ENCODE measurements at regions of chr18 and their contacts with region 1.

Region 1: GRCh38 chr18:54972690-54973445 is 13.6 kb upstream of the CCDC68 start:
- DNase-seq: no peak
- H3K4me3 ChIP-seq: no peak overlapping the region
- H3K27ac ChIP-seq: no peak overlapping the region
- H3K4me1 ChIP-seq: no peaks in the 10 kb centered on the region
- H3K27me3 ChIP-seq: no peaks in the 10 kb centered on the region
- CTCF ChIP-seq: no peak
- POLR2A ChIP-seq: no peak

Region 2: DNA sequence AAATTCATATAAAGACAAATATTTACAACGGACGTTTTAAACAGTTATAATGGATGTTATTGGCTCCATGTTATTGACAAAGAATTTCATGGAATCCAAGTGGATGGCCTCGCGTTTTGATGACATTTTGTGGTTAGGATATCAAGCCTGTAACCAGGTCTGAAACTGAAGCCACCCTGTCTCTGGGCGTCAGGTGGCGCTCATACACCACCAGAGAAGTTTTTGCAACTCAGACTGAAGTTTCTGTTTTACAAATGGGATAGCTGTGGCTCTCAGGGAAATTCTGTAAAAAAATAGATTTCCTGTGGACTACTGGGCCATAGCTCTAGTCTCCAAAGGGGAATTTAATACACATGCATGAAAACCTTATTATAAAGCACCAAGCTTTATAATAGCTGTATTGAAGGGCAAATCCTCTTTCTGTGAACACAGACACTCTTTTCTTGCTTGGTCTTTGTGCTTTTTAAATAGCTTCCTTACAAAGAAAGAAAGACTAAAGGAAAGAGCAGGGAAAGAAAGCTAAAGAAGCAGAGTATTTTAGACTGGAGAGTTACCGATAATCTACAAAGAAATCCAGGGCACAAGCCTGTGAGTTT is 528.5 kb before region 1 on chr18:
- intact Hi-C with region 1: loop called (anchors 5 kb)
- DNase-seq: no peak
- H3K4me3 ChIP-seq: no peak overlapping the region
- H3K27ac ChIP-seq: no peak overlapping the region
- H3K4me1 ChIP-seq: no peaks in the 10 kb centered on the region
- H3K27me3 ChIP-seq: peaks cover 0 to 1% of the 10 kb centered on the region in 2 donors
- CTCF ChIP-seq: peak in 2 of 3 donors; percentile 43 to 64
- POLR2A ChIP-seq: no peak

Region 3: GRCh38 chr18:56097621-56098020 is 1124.8 kb after region 1 on chr18:
- intact Hi-C with region 1: no loop called
- DNase-seq: no peak
- H3K4me3 ChIP-seq: no peak overlapping the region
- H3K27ac ChIP-seq: no peak overlapping the region
- H3K4me1 ChIP-seq: no peaks in the 10 kb centered on the region
- H3K27me3 ChIP-seq: no peaks in the 10 kb centered on the region
- CTCF ChIP-seq: no peak
- POLR2A ChIP-seq: no peak

Region 4: DNA sequence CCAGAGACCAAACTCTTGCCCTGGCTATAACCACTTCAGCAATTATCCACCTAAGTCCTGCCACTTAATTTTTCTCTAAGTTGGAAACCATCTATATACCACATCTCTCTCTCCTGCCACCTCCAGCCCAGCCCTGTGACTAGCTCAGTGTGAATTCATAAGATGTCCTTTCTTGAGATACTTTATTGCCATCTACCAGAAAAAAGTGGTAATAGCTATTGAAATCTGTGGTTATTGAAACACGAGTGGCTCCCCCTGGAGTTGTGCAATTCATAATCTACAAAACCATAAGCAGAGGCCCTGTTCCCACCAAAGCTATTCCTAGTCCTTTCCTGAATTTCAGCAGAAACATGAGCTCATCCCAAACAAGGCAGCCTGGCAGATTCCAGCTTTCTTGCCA is 1341.5 kb after region 1 on chr18:
- intact Hi-C with region 1: no loop called
- DNase-seq: no peak
- H3K4me3 ChIP-seq: no peak overlapping the region
- H3K27ac ChIP-seq: no peak overlapping the region
- H3K4me1 ChIP-seq: no peaks in the 10 kb centered on the region
- H3K27me3 ChIP-seq: no peaks in the 10 kb centered on the region
- CTCF ChIP-seq: no peak
- POLR2A ChIP-seq: no peak

Measured in breast epithelium (tissue), 4 donors.